ENCODE measurements at regions of chr12 and their contacts with region 1.

Region 1: GRCh38 chr12:47397664-47398281 is 308.1 kb downstream of the RPAP3 start:
- DNase-seq: peak; percentile 61
- H3K4me3 Mint-ChIP-seq: no peak overlapping the region
- H3K27ac Mint-ChIP-seq: peak overlapping the region; percentile 84
- H3K4me1 Mint-ChIP-seq: peaks cover 75% of the 10 kb centered on the region
- H3K27me3 Mint-ChIP-seq: no peaks in the 10 kb centered on the region

Region 2: GRCh38 chr12:47021298-47021697 is 376.5 kb before region 1 on chr12:
- CTCF ChIA-PET with region 1: interaction called, 11 read pairs
- DNase-seq: no peak
- H3K4me3 Mint-ChIP-seq: no peak overlapping the region
- H3K27ac Mint-ChIP-seq: no peak overlapping the region
- H3K4me1 Mint-ChIP-seq: no peaks in the 10 kb centered on the region
- H3K27me3 Mint-ChIP-seq: peaks cover 21% of the 10 kb centered on the region

Region 3: GRCh38 chr12:47079468-47079980 is 318.2 kb before region 1 on chr12 and contains the starts of genes AMIGO2 and PCED1B:
- CTCF ChIA-PET with region 1: interaction called, 35 read pairs
- DNase-seq: peak; percentile 78
- H3K4me3 Mint-ChIP-seq: peak within 1 kb of the TSS; percentile 94
- H3K27ac Mint-ChIP-seq: peak within 1 kb of the TSS; percentile 87
- H3K4me1 Mint-ChIP-seq: peaks cover 71% of the 10 kb centered on the region
- H3K27me3 Mint-ChIP-seq: peaks cover 8% of the 10 kb centered on the region

Region 4: GRCh38 chr12:47216150-47216677 is 181.6 kb before region 1 on chr12:
- CTCF ChIA-PET with region 1: interaction called, 28 read pairs
- DNase-seq: peak; percentile 88
- H3K4me3 Mint-ChIP-seq: peak overlapping the region; percentile 81
- H3K27ac Mint-ChIP-seq: peak overlapping the region; percentile 95
- H3K4me1 Mint-ChIP-seq: peaks cover 16% of the 10 kb centered on the region
- H3K27me3 Mint-ChIP-seq: no peaks in the 10 kb centered on the region

Region 5: GRCh38 chr12:47361389-47362021 is 36.3 kb before region 1 on chr12:
- CTCF ChIA-PET with region 1: interaction called, 20 read pairs
- DNase-seq: peak; percentile 62
- H3K4me3 Mint-ChIP-seq: peak overlapping the region; percentile 55
- H3K27ac Mint-ChIP-seq: peak overlapping the region; percentile 99
- H3K4me1 Mint-ChIP-seq: peaks cover 69% of the 10 kb centered on the region
- H3K27me3 Mint-ChIP-seq: no peaks in the 10 kb centered on the region

Region 6: DNA sequence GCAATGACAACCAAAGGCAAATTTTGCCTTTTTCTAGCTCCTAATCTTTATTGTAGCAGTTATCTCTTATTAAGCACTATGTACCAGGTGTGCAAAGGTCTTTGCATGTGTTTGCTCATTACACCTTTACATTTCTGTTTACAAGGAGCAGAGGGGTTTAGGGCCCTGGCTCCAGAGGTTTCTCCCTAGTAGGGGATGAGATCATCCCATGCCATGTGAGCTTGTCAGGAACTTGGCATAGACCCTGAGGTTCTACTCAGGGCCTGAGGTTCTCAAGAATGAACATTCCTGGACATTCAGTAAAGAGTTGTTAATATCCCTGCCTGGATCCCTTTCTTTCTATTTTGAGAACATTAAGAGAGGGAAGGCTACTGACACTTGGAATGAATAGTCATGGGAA is 16.0 kb after region 1 on chr12:
- CTCF ChIA-PET with region 1: interaction called, 19 read pairs
- DNase-seq: no peak
- H3K4me3 Mint-ChIP-seq: no peak overlapping the region
- H3K27ac Mint-ChIP-seq: no peak overlapping the region
- H3K4me1 Mint-ChIP-seq: peaks cover 36% of the 10 kb centered on the region
- H3K27me3 Mint-ChIP-seq: no peaks in the 10 kb centered on the region